Dorsolateral prefrontal cortex (tissue), 120 donors: ENCODE measurements at regions of chr1 and their contacts with region 1.

Region 1: DNA sequence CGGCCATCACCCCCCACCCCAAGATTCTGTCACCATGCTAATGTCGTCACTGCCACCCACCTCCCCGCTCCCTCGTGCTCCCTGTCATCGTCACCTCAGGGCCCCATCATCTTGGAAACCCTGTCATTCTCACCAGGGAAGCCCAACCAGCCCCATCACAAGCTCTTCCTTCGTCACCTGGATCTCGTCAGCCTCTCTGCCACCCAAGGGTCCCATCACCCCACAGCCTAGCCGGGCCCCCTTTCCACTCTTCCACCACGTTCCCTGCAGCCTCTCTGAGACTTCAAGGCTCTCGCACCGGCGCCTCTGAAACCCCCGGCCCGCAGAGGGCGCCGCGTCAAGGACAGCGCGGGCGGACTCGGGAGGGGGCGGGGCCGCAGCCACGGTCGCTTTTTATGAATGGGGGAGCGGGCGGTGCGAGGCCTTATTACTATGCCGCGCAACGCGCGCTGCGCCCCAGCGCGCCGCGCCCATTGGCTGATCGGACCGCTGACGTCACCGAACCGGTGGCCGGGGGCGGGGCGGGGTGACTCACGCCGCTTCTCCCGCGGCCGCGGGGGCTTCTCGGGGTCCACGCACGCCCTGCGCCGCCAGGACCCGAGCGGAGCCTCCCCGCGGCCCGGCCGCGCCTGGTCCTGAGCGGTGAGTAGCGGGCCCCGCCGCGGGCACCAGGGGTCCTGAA is at the start of gene GPR3:
- DNase-seq: peak; percentile 81 to 93 (median 90)
- H3K4me3 ChIP-seq: peak within 1 kb of the TSS; percentile 41 to 82 (median 68)
- H3K27ac ChIP-seq: peak within 1 kb of the TSS in 48 of 59 donors; percentile 21 to 92 (median 66)
- H3K27me3 ChIP-seq: no peaks in the 10 kb centered on the region
- CTCF ChIP-seq: peak; percentile 15 to 77 (median 64)
- total RNA-seq, gene GPR3: 0.29 to 10.1 (median 2.2) TPM

Region 2: DNA sequence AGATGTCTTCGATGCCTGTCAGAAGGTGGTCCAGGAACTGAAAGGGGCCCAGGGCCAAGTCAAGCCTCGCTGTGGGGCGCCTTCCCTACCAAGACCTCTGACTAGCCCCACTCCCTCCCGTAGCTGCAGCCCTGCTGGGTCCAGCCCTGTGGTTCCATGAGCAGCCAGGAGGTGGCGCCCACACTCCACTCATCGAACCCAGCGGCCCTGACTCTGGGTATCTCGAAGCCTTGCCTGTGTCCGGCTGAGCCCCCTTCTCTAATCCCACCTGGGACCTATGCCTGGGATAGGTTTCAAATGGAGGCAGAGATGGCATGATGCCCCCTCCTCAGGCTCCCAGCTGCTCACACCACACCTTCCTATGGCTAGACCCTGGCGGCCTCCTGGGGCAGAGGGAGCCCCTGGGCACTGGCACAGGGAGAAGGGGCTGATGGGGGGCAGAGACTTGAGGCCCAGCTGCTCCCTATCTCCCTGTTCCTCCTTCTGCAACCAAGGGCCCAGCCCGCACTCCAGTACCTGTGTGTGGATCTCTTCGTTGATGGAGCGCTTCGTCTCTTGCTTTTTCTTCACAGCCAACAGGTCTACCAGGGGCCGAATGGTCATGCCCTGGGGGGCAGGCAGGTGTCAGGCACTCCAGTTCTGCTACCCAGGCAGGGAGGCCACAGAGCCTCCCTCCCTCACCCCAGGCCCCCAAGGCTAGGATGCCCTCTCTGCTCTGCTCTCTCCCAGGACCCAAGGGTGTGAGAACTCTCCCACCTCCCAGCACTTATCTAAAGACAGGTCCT is 289.3 kb before region 1 on chr1:
- intact Hi-C with region 1: loop called in 1 of 2 experiments (anchors 10 kb)
- DNase-seq: peak; percentile 75 to 92 (median 87)
- H3K4me3 ChIP-seq: peak overlapping the region in 3 of 59 donors; percentile 0 to 44 (median 3)
- H3K27ac ChIP-seq: peak overlapping the region in 25 of 59 donors; percentile 7 to 67 (median 49)
- H3K27me3 ChIP-seq: no peaks in the 10 kb centered on the region
- CTCF ChIP-seq: peak in 55 of 56 donors; percentile 77 to 100 (median 98)

Region 3: GRCh38 chr1:27300341-27301051 is 91.7 kb before region 1 on chr1:
- intact Hi-C with region 1: loop called (anchors 2 kb)
- DNase-seq: peak; percentile 71 to 91 (median 86)
- H3K4me3 ChIP-seq: no peak overlapping the region
- H3K27ac ChIP-seq: peak overlapping the region in 58 of 59 donors; percentile 27 to 97 (median 85)
- H3K27me3 ChIP-seq: no peaks in the 10 kb centered on the region
- CTCF ChIP-seq: peak; percentile 83 to 100 (median 99)

Region 4: GRCh38 chr1:27357281-27358037 is 34.8 kb before region 1 on chr1:
- intact Hi-C with region 1: loop called (anchors 5 kb)
- DNase-seq: peak; percentile 50 to 84 (median 60)
- H3K4me3 ChIP-seq: peak overlapping the region in 36 of 59 donors; percentile 6 to 54 (median 37)
- H3K27ac ChIP-seq: peak overlapping the region in 1 of 59 donors; percentile 6
- H3K27me3 ChIP-seq: no peaks in the 10 kb centered on the region
- CTCF ChIP-seq: peak; percentile 63 to 99 (median 95)

Region 5: GRCh38 chr1:27455139-27455811 is 63.0 kb after region 1 on chr1:
- intact Hi-C with region 1: no loop called
- DNase-seq: no peak
- H3K4me3 ChIP-seq: no peak overlapping the region
- H3K27ac ChIP-seq: peak overlapping the region in 4 of 59 donors; percentile 5 to 35 (median 18)
- H3K27me3 ChIP-seq: no peaks in the 10 kb centered on the region
- CTCF ChIP-seq: no peak